Posterior vena cava (tissue), 2 donors: ENCODE measurements at regions of chr20 and their contacts with region 1.

Region 1: GRCh38 chr20:54633374-54634355 is 158.3 kb downstream of the DOK5 start:
- DNase-seq: no peak

Region 2: GRCh38 chr20:55515832-55516231 is 882.2 kb after region 1 on chr20:
- intact Hi-C with region 1: loop called in 1 of 2 experiments (anchors 5 kb)
- DNase-seq: no peak